ENCODE measurements at regions of chr11 and their contacts with region 1.

Region 1: DNA sequence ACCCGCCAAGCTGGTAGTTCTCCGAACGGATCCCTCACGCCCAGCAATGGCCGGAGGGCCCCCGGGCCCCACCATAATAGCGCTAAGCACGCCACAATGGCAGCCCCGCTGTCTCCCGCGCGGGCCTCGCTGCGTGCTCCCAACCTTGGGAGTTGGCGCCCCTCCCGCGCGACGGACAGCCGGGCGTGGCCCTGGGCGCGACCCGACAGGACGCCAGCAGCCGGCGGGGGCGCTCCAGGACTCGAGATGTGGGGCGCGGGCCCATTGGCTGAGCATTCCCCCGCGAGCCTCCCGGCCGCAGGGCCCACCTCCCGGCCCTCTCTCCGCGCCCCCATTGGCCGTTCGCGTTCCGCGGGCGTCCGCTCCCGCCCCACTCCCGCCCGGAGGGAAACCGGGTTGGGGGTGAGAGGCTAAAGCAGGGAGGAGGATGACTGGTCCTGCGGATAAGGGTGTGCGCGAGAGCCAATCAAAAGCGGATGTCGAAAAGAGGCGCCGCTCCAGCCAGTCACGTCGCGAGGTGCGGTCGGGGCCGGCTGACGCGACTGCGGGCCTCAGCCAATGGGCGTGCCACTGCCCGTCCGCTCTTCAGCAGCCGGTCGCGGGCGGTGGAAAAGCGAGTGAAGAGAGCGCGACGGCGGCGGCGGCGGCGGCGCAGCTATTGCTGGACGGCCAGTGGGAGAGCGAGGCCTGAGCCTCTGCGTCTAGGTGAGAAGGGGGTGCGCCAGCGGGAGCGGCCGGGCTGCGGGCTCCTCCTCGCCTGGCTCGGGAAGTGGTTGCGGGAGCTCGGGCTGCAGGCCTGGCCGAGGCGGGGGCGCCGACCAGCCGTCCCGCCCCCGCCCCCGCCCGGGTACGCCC is at the start of gene FAR1:
- DNase-seq: peak; percentile 100
- H3K4me3 ChIP-seq: peak within 1 kb of the TSS; percentile 84 to 95 (median 90)
- H3K27ac ChIP-seq: peak within 1 kb of the TSS; percentile 81
- H3K4me1 ChIP-seq: peaks cover 20% of the 10 kb centered on the region
- H3K27me3 ChIP-seq: no peaks in the 10 kb centered on the region
- CTCF ChIP-seq: peak; percentile 59 to 71
- POLR2A ChIP-seq: peak; percentile 75
- total RNA-seq, gene FAR1: 72.3 and 76.4 TPM in 2 replicates

Region 2: GRCh38 chr11:13535819-13536218 is 132.5 kb before region 1 on chr11:
- CTCF ChIA-PET with region 1: no interaction called
- POLR2A ChIA-PET with region 1: no interaction called
- dilution Hi-C with region 1: no loop called
- intact Hi-C with region 1: no loop called
- DNase-seq: no peak
- H3K4me3 ChIP-seq: no peak overlapping the region
- H3K27ac ChIP-seq: no peak overlapping the region
- H3K4me1 ChIP-seq: no peaks in the 10 kb centered on the region
- H3K27me3 ChIP-seq: no peaks in the 10 kb centered on the region
- CTCF ChIP-seq: no peak
- POLR2A ChIP-seq: no peak

Region 3: GRCh38 chr11:13567551-13567950 is 100.8 kb before region 1 on chr11:
- CTCF ChIA-PET with region 1: no interaction called
- POLR2A ChIA-PET with region 1: no interaction called
- dilution Hi-C with region 1: no loop called
- intact Hi-C with region 1: no loop called
- DNase-seq: no peak
- H3K4me3 ChIP-seq: no peak overlapping the region
- H3K27ac ChIP-seq: no peak overlapping the region
- H3K4me1 ChIP-seq: no peaks in the 10 kb centered on the region
- H3K27me3 ChIP-seq: no peaks in the 10 kb centered on the region
- CTCF ChIP-seq: no peak
- POLR2A ChIP-seq: no peak

Region 4: DNA sequence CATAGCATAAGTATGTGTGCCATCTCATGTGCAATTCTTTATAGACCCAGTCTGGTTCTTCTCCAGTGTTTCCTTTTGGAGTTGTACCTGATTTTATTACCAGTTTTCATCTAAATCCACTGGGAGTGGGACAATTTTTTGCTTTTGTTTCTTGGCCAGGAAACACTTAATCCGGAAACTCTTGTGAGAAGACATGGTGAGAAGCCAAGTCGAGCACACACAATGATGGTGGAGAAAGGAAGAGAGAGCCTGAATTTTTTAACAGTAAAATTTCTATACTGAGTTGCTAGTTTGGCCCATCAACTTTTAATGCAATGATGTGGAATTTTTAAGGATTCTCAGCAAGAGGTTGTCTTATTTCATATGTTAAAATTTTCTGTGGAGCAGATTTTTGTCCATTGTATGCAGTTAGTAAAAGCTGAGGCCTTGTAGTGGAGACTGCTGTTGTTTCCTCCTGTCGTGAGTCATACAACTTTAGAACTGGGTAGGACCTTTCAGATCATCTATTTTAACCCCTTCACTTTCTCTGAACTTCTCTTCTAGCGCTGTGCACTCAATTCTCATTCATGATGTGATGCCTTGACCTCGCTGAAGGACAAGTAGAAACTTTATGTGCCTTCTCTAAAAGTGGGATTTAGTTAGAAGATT is 17.3 kb after region 1 on chr11:
- CTCF ChIA-PET with region 1: interaction called, 3 read pairs
- POLR2A ChIA-PET with region 1: no interaction called
- dilution Hi-C with region 1: no loop called
- intact Hi-C with region 1: loop called (anchors 1 kb)
- DNase-seq: peak; percentile 81
- H3K4me3 ChIP-seq: peak overlapping the region in 1 of 3 experiments; percentile 1
- H3K27ac ChIP-seq: peak overlapping the region; percentile 27
- H3K4me1 ChIP-seq: peaks cover 43% of the 10 kb centered on the region
- H3K27me3 ChIP-seq: no peaks in the 10 kb centered on the region
- CTCF ChIP-seq: no peak
- POLR2A ChIP-seq: no peak

Region 5: GRCh38 chr11:13717331-13717730 is 49.0 kb after region 1 on chr11:
- CTCF ChIA-PET with region 1: no interaction called
- POLR2A ChIA-PET with region 1: no interaction called
- dilution Hi-C with region 1: no loop called
- intact Hi-C with region 1: loop called (anchors 1 kb)
- DNase-seq: peak; percentile 84
- H3K4me3 ChIP-seq: no peak overlapping the region
- H3K27ac ChIP-seq: peak overlapping the region; percentile 19
- H3K4me1 ChIP-seq: peaks cover 22% of the 10 kb centered on the region
- H3K27me3 ChIP-seq: no peaks in the 10 kb centered on the region
- CTCF ChIP-seq: no peak
- POLR2A ChIP-seq: no peak

Region 6: GRCh38 chr11:14015476-14016110 is 347.3 kb after region 1 on chr11:
- CTCF ChIA-PET with region 1: no interaction called
- POLR2A ChIA-PET with region 1: no interaction called
- dilution Hi-C with region 1: no loop called
- intact Hi-C with region 1: no loop called
- DNase-seq: peak; percentile 78
- H3K4me3 ChIP-seq: no peak overlapping the region
- H3K27ac ChIP-seq: no peak overlapping the region
- H3K4me1 ChIP-seq: peaks cover 3% of the 10 kb centered on the region
- H3K27me3 ChIP-seq: no peaks in the 10 kb centered on the region
- CTCF ChIP-seq: no peak
- POLR2A ChIP-seq: no peak